Left cardiac atrium (tissue), 4 donors: ENCODE measurements at regions of chr6 and their contacts with region 1.

Region 1: DNA sequence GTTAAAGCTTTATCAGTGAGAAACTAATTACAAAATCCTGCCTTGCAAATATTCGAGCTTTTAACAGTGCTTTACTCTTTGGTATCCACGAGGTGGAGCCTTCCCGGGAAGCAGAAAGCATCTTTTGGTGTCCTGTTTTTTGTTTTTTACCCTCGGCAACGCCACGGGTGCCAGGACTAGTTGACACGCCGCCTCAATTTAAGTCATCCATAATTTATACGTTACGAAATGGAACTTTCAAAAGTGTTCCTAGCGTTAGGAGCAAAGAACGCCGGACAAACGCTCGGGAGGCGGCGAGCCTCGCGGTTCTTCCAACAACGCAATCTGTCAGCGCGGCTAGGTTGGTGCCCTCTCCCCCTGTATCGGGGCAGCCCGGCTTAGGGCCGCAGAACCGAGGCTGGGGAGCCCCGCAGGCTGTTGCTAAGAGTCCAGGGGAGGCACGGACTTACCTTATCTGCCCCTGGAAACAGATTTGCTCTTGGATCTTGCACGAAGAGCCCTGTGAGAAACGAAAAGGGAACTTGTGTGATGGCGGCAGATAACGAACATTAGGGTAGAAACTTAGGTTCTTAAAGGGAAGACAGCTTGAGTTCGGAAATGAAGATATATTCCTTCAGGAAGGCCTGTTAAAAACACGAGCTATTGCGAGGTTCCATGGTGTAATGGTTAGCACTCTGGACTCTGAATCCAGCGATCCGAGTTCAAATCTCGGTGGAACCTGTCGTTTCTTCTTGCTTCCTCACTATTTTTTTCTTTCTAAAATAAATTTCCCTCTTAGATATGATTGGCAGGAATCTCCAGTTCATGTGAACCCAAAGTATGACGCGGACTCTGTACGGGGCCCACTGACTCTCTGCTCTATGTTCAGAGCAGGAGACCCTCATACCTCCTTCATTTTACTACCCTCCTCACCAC is 46.2 kb upstream of the ZNF184 start:
- DNase-seq: peak; percentile 57
- ATAC-seq: peak; percentile 91 to 96

Region 2: DNA sequence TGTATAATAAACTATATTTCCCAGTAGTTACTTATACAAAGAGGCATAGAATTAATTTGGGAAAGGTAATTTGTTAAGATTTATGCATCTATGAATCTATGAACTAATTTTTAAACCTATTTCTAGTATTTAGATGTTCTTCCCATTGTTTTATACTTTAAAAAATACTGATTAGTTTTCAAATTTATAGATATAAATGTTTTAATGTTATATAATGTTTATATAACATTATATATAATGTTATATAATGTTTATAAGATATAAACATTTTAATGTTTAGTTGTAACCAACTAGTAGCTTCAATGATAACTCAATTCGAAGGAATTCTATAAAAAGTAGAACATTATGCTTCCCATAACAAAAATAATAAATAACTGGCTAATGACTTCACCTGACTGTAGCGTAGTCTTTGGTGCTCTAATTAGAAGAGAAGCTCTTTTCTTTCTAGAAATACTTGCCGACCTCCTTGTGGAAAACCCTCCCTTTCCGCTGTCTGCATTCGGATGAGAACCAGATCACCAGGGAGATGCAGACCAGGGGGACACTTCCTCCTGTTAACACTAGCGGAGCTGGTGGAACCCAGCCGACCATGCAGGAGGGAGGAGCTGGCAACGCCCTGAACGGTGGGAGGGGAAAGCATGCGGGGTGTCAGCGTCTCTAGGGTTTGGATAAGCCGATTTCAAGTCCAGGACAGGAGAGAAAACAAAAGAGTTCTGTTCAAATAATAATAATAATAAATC is 234.7 kb after region 1 on chr6:
- intact Hi-C with region 1: loop called (anchors 2 to 10 kb)
- DNase-seq: peak; percentile 79
- ATAC-seq: peak; percentile 56 to 77

Region 3: GRCh38 chr6:27902335-27903314 is 383.5 kb after region 1 on chr6:
- intact Hi-C with region 1: loop called in 1 of 2 experiments (anchors 10 kb)
- DNase-seq: peak; percentile 73
- ATAC-seq: peak; percentile 95 to 97

Region 4: DNA sequence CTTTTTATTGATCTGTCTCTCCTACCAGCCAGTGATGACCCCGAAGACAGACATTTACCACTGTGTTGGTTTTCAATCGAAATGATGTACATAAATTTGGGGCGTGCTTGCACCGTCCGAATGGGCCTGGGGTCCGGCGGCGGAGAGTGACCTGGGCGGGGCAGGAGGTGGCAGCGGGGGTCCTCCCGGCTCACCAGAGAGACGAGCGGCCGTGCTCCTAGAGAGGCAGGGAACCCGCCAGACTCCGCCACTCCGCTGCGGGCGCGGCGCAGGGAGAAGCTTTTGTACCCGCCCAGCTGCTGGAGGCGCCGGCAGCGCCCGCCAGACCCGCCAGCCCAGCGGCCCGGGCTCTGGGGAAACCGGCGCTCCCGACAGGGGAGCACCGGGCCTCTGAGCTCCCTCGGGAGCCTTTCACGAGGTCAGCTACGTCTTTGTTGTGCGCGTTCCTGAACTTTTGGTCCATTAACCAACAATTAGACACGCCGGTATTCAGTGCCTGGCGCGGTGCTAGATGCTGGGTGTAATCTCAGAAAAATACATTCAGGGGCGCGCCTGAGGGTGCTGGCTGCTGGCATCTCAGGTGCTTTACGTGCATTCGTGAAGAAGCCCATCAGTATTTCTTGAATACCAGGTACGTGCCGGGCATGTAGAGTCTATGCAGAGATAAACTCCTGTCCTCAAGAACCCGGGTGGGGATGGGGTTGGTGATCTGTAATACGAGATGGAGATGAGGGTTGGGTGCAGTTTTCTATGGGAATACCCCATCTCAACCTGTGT is 762.3 kb after region 1 on chr6 and contains the start of gene PGBD1:
- intact Hi-C with region 1: no loop called
- DNase-seq: peak; percentile 87
- ATAC-seq: peak; percentile 96 to 98
- total RNA-seq, gene PGBD1: 2.7 TPM